Ascending aorta (tissue), 2 donors: ENCODE measurements at regions of chr6 and their contacts with region 1.

Region 1: GRCh38 chr6:72084992-72085569 is 198.7 kb downstream of the RIMS1 start:
- DNase-seq: no peak
- H3K4me3 ChIP-seq: no peak overlapping the region
- H3K27ac ChIP-seq: no peak overlapping the region
- H3K4me1 ChIP-seq: no peaks in the 10 kb centered on the region
- H3K27me3 ChIP-seq: no peaks in the 10 kb centered on the region
- CTCF ChIP-seq: peak in 2 of 3 experiments; percentile 36 to 60

Region 2: GRCh38 chr6:71309656-71310055 is 775.4 kb before region 1 on chr6:
- intact Hi-C with region 1: no loop called
- DNase-seq: no peak
- H3K4me3 ChIP-seq: no peak overlapping the region
- H3K27ac ChIP-seq: no peak overlapping the region
- H3K4me1 ChIP-seq: no peaks in the 10 kb centered on the region
- H3K27me3 ChIP-seq: no peaks in the 10 kb centered on the region
- CTCF ChIP-seq: no peak

Region 3: GRCh38 chr6:71383901-71384489 is 701.1 kb before region 1 on chr6:
- intact Hi-C with region 1: loop called (anchors 10 kb)
- DNase-seq: no peak
- H3K4me3 ChIP-seq: no peak overlapping the region
- H3K27ac ChIP-seq: no peak overlapping the region
- H3K4me1 ChIP-seq: peaks cover 0 to 4% of the 10 kb centered on the region in 2 donors
- H3K27me3 ChIP-seq: no peaks in the 10 kb centered on the region
- CTCF ChIP-seq: peak; percentile 47 to 78 (median 52)

Region 4: DNA sequence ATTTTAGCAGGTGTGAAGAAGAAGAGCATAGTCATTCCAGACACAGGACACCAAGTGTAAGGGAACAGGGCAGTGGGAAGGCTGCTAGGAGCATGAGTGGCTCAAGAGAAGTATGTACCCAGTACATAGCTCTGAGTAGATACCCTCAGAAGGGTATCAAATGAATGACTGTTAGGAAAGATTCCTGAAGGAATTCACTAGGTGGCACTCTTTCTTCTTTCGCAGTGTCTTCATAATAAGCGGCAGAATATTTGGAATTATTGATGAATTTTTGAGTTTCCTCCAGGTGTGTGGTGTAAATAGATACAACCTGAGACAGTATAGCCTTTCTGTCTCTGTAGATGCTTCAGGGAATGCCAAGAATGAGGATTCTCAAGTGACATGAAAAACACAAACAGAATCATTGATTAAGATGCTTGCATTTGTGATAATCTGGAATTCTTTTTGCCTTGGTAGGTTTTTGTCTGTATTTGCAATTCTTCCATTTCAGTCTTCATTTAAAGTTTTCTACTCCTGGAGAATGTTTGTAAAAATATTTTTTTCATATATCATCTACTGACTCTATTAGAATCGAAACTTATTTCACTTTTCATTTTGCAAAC is 463.1 kb before region 1 on chr6:
- intact Hi-C with region 1: loop called (anchors 5 kb)
- DNase-seq: no peak
- H3K4me3 ChIP-seq: no peak overlapping the region
- H3K27ac ChIP-seq: no peak overlapping the region
- H3K4me1 ChIP-seq: no peaks in the 10 kb centered on the region
- H3K27me3 ChIP-seq: no peaks in the 10 kb centered on the region
- CTCF ChIP-seq: peak in 2 of 3 experiments; percentile 40 to 54